HepG2 (cell line): ENCODE measurements at regions of chr9 and their contacts with region 1.

Region 1: DNA sequence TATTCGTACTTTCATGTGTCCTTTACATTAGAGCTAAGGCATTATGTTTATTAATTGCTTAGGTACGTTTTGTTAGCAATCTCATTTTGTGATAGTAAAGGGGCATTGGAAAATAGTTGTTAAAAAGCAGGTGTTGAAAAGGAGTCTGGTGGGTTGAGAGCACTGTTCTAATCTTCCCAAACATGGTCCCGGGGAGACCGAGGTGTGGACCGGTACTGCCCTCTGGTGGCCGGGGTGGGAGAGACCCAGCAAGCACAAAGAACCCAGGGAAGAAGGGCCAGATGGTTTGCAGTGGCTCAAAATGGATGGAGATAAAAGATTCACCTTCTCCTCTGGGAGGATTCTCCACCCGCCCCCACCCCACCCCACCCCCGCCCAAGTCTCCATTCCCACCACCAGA is 26.1 kb downstream of the IDNK start:
- DNase-seq: peak; percentile 51
- ATAC-seq: peak; percentile 90
- H3K4me3 ChIP-seq: no peak overlapping the region
- H3K27ac ChIP-seq: no peak overlapping the region
- H3K4me1 ChIP-seq: no peaks in the 10 kb centered on the region
- H3K27me3 ChIP-seq: no peaks in the 10 kb centered on the region
- CTCF ChIP-seq: peak; percentile 93
- EP300 ChIP-seq: no peak
- POLR2A ChIP-seq: no peak
- RAD21 ChIP-seq: peak; percentile 85

Region 2: GRCh38 chr9:83583151-83584014 is 65.7 kb before region 1 on chr9:
- CTCF ChIA-PET with region 1: interaction called, 9 read pairs
- POLR2A ChIA-PET with region 1: no interaction called
- in situ Hi-C with region 1: no loop called
- intact Hi-C with region 1: loop called (anchors 1 kb)
- DNase-seq: peak; percentile 47
- ATAC-seq: peak; percentile 90
- H3K4me3 ChIP-seq: no peak overlapping the region
- H3K27ac ChIP-seq: no peak overlapping the region
- H3K4me1 ChIP-seq: no peaks in the 10 kb centered on the region
- H3K27me3 ChIP-seq: no peaks in the 10 kb centered on the region
- CTCF ChIP-seq: peak; percentile 74
- EP300 ChIP-seq: no peak
- POLR2A ChIP-seq: no peak
- RAD21 ChIP-seq: no peak

Region 3: GRCh38 chr9:83617299-83617698 is 31.8 kb before region 1 on chr9:
- CTCF ChIA-PET with region 1: interaction called, 51 read pairs
- POLR2A ChIA-PET with region 1: interaction called, 16 read pairs
- in situ Hi-C with region 1: loop called (anchors 5 kb)
- intact Hi-C with region 1: loop called (anchors 1 kb)
- DNase-seq: no peak
- ATAC-seq: no peak
- H3K4me3 ChIP-seq: no peak overlapping the region
- H3K27ac ChIP-seq: no peak overlapping the region
- H3K4me1 ChIP-seq: peaks cover 20% of the 10 kb centered on the region
- H3K27me3 ChIP-seq: no peaks in the 10 kb centered on the region
- CTCF ChIP-seq: no peak
- EP300 ChIP-seq: no peak
- POLR2A ChIP-seq: no peak
- RAD21 ChIP-seq: no peak